ENCODE measurements at regions of chr3 and their contacts with region 1.

Region 1: DNA sequence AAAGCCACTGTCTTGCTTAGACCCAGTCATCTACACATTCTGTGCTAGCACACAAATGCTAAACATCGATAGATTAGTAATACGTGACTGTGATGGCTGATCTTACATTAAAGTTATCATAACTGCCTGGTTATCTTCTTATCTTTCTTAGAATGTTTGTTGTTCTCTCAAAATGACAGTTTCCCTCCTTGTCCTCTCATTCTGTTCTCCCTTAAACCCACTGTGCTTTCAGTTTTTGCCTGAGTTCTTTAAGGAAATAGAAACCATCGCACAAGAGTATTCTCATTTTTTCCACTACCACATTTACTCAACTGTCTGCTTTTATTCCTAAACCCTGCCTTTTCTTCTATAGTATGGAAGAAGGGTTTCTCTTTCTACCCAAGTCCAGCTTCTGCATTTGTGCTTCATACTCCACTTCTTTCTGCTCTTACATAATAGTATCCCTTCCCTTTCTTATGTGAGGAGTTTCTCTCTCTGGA is 17.1 kb downstream of the STX19 start:
- DNase-seq: no peak
- H3K4me3 Mint-ChIP-seq: peak overlapping the region; percentile 23
- H3K27ac Mint-ChIP-seq: peak overlapping the region; percentile 91
- H3K4me1 Mint-ChIP-seq: peaks cover 44% of the 10 kb centered on the region
- H3K27me3 Mint-ChIP-seq: no peaks in the 10 kb centered on the region

Region 2: DNA sequence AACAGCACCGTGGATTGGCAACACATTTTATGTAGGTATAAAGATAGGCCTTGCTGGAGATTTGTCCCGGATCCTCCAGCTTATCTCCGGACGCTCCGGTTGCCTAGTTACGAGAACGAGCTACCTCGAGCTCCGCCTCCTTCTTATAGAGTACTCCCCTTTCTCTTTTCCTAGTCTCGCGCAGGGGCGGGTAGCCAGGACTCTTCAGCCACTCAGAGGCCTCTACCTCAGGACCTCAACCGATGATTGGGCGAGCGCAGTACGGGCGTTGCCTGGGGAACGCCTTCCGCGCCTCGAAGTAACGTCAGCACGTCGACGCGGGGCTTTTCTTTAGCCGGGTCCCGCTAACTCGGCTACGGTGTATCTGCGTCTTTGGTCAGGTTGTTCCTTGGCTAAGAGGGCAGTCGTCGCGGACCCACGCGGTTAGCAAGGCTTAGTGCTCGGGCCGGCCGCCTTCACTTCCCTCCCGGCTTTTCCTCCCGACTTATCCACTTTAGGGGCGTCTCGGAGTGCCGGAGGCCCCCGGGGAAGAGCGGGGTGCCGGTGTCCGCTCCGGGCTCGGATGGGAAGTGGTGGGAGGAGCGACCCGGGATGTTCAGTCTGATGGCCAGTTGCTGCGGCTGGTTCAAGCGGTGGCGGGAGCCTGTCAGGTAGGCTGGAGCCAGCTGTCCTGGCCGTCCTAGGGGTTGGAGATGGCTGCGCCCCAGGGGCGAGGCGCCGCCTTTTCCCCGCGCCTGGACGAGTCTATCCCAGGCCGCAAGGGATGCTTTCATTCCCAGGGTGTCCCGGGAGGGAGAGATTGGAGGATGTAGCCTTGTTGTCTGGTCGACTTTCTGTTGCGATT is 31.2 kb before region 1 on chr3 and contains the start of gene ARL13B:
- intact Hi-C with region 1: loop called (anchors 1 kb)
- DNase-seq: peak; percentile 93
- H3K4me3 Mint-ChIP-seq: peak within 1 kb of the TSS; percentile 92
- H3K27ac Mint-ChIP-seq: peak within 1 kb of the TSS; percentile 86
- H3K4me1 Mint-ChIP-seq: peaks cover 29% of the 10 kb centered on the region
- H3K27me3 Mint-ChIP-seq: peaks cover 2% of the 10 kb centered on the region
- total RNA-seq, gene ARL13B: 14.7 and 15.9 TPM in 2 replicates

Region 3: GRCh38 chr3:94036909-94037507 is 25.7 kb after region 1 on chr3:
- intact Hi-C with region 1: loop called (anchors 1 kb)
- DNase-seq: no peak
- H3K4me3 Mint-ChIP-seq: no peak overlapping the region
- H3K27ac Mint-ChIP-seq: no peak overlapping the region
- H3K4me1 Mint-ChIP-seq: no peaks in the 10 kb centered on the region
- H3K27me3 Mint-ChIP-seq: no peaks in the 10 kb centered on the region

Region 4: DNA sequence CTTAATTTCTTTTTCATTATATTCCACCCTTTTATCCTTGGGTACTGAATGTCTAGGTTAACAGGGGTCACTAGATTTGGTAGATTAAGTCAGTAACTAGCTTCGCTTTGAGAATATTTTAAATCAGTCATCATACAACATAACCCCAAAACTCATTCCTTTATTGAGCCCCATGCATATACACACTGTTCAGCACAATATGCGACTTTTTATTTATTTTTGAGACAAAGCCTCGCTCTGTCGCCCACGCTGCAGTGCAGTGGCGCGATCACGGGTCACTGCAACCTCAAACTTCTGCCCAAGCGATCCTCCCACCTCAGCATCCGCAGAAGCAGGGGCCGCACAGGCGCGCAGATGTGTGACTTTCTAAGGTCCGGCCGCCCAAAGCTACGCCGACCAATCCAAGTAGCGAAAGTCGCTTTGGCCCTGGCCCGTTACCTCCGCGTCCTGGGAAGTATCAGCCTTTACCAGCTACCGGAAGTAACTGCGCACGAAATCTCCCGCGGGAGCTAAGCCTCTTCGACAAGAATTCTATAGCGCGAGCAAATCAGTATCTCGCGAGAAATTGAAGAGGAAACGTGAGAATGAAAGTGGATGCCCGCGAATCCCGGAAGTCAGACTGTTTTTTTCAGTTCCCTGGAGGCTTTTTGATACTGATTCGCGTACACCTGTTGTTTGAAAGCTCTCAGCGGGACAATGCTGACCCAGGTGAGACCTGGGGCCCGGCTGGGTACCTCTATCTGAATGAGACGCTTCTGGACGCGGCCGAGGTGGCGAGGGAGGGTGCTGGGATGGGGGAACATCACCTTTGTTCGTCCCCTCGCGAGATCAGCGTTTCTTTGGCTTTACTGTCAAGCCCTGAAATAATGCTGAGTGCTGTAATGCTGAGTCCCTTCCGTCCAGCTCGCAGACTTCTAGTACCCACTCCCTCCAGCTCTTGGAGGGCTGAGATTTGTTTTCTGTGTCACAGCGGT is 51.4 kb after region 1 on chr3 and contains the starts of genes DHFR2 and NSUN3:
- intact Hi-C with region 1: loop called (anchors 1 kb)
- DNase-seq: peak; percentile 82
- H3K4me3 Mint-ChIP-seq: peak within 1 kb of the TSS; percentile 98
- H3K27ac Mint-ChIP-seq: peak within 1 kb of the TSS; percentile 97
- H3K4me1 Mint-ChIP-seq: peaks cover 47% of the 10 kb centered on the region
- H3K27me3 Mint-ChIP-seq: no peaks in the 10 kb centered on the region
- total RNA-seq, gene DHFR2: 10.1 and 12.3 TPM in 2 replicates
- total RNA-seq, gene NSUN3: 18.8 and 19.7 TPM in 2 replicates

Region 5: DNA sequence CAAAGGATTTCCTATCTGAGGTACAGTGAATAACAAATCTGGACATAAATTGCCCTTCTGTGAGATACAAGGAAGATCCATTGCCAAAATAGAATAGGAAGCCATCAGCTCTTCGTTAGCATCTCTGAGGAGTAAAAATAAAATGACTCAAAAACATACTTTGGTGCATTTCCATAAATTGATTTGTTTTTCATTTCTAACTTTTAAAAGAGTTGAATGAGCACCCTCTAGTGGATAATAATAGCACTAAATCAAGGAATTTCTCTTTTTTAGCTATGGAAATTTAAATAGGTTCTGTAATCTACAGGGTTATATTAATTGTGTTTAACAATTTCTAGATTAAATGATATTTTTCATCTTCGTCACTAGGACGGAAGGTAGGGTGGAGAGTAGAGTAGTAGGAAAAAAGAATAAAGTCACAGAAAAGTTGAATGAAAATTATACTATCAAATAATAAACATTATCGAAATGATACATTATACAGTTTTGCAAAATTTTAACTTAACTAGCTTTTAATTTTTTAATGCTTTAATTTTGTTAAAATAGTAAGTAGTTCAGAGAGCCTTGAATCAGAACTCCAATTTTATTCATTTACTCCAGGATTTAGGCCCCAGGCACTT is 58.0 kb after region 1 on chr3:
- intact Hi-C with region 1: loop called (anchors 1 kb)
- DNase-seq: no peak
- H3K4me3 Mint-ChIP-seq: no peak overlapping the region
- H3K27ac Mint-ChIP-seq: peak overlapping the region; percentile 26
- H3K4me1 Mint-ChIP-seq: peaks cover 78% of the 10 kb centered on the region
- H3K27me3 Mint-ChIP-seq: no peaks in the 10 kb centered on the region